Natural killer cell (primary cell): ENCODE measurements at regions of chr4 and their contacts with region 1.

Region 1: DNA sequence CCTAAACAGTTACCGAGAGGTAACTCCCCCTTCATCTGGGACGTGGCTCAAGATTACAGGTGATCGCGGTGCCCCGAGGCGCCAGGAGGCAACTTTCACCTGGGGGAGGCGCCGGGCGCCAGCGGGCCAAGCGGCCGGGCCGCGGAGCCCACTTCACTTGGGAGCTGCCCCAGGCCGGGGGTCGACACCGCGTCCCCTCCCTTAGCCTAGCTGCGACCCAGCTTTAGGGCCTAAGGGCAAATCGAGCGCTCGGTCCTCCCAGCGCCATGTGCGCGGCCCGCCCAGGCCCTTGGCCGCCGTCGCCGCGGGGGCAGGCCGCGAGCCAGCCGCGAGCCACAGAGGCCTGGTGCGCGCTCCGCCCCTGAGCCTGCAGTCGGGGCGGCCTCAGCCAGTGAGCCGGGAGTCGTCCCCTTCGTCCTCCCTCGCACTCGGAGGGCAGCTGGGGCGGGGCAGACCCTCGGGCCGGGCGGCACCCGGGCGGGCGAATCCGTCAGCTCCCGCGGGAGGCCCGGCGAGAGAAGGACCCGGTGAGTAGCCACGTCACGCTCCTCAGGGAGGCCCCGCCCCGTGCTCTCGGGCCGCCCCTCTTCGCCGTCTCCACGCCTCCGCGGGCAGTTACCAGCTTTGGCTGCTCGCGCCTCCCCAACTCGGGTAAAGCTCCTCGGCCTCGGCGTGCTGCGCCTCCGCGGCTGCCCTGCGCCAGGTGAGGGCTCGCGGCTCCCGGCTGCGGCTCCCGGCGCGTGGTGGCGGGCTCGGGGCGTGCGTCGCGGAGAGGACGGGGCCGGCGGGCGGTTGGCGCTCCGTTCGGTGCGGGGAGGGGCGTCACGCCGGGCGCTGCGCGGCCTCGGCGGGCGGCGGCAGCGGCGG is at the start of gene LARP1B:
- DNase-seq: peak; percentile 89 to 94
- ATAC-seq: peak; percentile 88 to 96 (median 89)
- H3K4me3 ChIP-seq: peak within 1 kb of the TSS; percentile 40
- H3K4me3 Mint-ChIP-seq: peak within 1 kb of the TSS; percentile 85
- H3K27ac ChIP-seq: peak within 1 kb of the TSS; percentile 90
- H3K27ac Mint-ChIP-seq: peak within 1 kb of the TSS; percentile 77 to 80
- H3K4me1 ChIP-seq: peaks cover 15% of the 10 kb centered on the region
- H3K4me1 Mint-ChIP-seq: peaks cover 9 to 10% of the 10 kb centered on the region in 2 donors
- H3K27me3 ChIP-seq: no peaks in the 10 kb centered on the region
- H3K27me3 Mint-ChIP-seq: no peaks in the 10 kb centered on the region
- CTCF ChIP-seq: no peak
- total RNA-seq, gene LARP1B: 8.5 to 10.7 (median 9.1) TPM

Region 2: DNA sequence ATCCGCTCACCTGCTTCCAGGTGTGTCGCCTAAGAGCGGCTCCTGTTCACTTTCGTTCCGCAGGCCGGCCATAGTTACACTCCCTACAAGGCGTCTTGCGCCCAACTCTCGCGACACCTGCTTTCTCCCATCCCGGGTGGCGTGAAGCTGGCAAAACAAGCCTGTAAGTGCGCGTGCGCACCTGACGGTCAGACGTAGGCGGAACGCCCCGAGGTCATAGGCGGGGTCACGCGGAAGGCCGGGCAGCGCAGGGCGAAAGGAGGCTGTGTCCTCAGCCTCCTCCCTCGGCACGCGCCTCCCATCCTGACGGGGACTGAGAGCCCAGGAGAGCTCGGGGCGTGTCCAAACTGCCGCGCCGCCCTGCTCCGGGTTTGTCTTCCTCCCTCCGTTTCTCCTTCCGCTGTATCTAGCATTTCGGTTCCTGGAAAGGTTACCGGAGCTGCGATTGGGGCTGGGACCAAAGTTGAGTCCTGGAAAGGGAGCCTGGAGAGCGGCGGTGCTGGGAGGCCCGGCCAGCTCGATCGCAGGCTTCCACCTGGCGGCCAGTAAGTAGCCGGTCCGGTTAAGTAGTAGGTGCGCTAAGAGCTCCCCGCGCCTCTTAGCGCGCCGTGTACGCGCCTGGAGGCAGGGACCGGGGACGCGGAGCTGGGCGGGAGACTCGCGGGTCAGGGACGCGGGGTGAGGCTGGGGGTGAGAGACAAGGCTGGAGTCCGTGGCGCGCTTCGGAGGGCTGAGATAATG is 95.7 kb before region 1 on chr4 and contains the starts of genes ABHD18 and MFSD8:
- intact Hi-C with region 1: loop called (anchors 1 kb)
- DNase-seq: peak; percentile 95 to 100
- ATAC-seq: peak; percentile 91 to 98 (median 93)
- H3K4me3 ChIP-seq: peak within 1 kb of the TSS; percentile 85
- H3K4me3 Mint-ChIP-seq: peak within 1 kb of the TSS; percentile 97
- H3K27ac ChIP-seq: peak within 1 kb of the TSS; percentile 87
- H3K27ac Mint-ChIP-seq: peak within 1 kb of the TSS; percentile 95 to 98
- H3K4me1 ChIP-seq: peaks cover 16% of the 10 kb centered on the region
- H3K4me1 Mint-ChIP-seq: peaks cover 30 to 32% of the 10 kb centered on the region in 2 donors
- H3K27me3 ChIP-seq: no peaks in the 10 kb centered on the region
- H3K27me3 Mint-ChIP-seq: no peaks in the 10 kb centered on the region
- CTCF ChIP-seq: peak; percentile 25
- total RNA-seq, gene ABHD18: 16.0 to 21.9 (median 17.6) TPM
- total RNA-seq, gene MFSD8: 25.9 to 34.0 (median 25.9) TPM

Region 3: GRCh38 chr4:128287871-128288688 is 227.1 kb after region 1 on chr4:
- intact Hi-C with region 1: loop called (anchors 5 kb)
- DNase-seq: peak; percentile 97 to 100
- ATAC-seq: peak; percentile 84 to 94 (median 85)
- H3K4me3 ChIP-seq: peak overlapping the region; percentile 87
- H3K4me3 Mint-ChIP-seq: peak overlapping the region; percentile 93
- H3K27ac ChIP-seq: peak overlapping the region; percentile 97
- H3K27ac Mint-ChIP-seq: peak overlapping the region; percentile 85 to 90
- H3K4me1 ChIP-seq: peaks cover 16% of the 10 kb centered on the region
- H3K4me1 Mint-ChIP-seq: peaks cover 34 to 35% of the 10 kb centered on the region in 2 donors
- H3K27me3 ChIP-seq: no peaks in the 10 kb centered on the region
- H3K27me3 Mint-ChIP-seq: peaks cover 0 to 2% of the 10 kb centered on the region in 2 donors
- CTCF ChIP-seq: no peak